Right ventricle myocardium inferior (tissue), 1 donor: ENCODE measurements at regions of chr3 and their contacts with region 1.

Region 1: GRCh38 chr3:120417272-120417911 is 33.4 kb downstream of the FSTL1 start:
- DNase-seq: peak; percentile 88
- ATAC-seq: peak; percentile 61

Region 2: DNA sequence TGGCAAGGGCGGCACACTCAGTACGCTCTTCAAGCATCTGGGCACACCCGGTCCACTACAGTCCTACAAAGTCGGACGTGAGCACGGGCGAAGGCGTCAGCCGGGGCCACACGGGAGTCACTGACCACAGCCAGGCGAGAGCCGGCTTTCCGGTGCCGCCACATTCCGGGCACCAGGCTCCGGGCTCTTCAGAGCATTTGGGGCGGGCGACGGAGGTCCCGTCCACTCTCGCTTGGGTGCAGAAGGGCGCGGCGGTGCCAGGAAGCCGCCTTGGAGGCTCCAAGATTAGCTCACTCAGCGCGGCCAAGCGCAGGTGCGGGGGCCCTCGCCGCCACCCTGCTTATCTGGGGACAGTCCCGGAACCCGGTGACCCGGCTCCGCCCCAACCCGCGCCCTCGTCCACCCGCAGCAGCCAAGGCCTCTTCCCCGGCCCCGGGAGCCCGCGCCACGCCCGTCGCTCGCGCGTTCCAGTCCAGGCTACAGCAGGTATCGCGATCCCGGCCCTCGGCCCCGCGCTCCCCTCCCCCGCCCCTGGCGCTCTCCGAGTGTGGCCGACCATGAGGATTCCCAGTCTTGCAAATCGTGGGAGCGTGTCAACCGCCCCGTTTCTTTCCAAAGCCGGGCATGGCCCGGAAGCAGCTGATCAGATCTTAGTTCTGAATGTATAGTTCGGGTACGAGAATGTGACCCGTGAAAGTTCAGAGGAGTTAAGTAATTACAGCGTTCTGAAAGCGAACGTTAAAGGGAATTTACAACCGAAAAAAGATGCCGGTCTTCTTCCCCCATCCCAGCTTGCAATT is 837.8 kb before region 1 on chr3 and contains the start of gene ADPRH:
- intact Hi-C with region 1: loop called (anchors 5 kb)
- DNase-seq: peak; percentile 92
- ATAC-seq: peak; percentile 94
- total RNA-seq, gene ADPRH: 10.1 TPM

Region 3: DNA sequence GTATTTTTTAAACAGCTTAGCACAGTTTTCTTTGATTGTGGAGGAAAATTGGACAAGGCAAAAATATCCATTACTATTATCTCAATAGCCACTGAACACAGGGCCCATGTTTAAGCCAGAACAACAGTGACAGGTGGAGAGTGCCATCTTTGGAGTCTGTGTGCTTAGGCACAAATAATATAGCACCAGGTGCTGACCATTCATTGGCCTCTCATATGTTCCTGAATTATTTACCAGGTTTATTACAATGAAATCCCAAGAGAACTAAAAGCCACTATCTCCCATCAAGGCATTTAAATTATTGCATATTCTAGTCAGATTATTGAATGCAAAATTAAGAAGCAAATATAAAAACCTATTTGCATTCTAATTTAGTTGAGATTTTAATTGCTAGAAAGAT is 172.0 kb before region 1 on chr3:
- intact Hi-C with region 1: loop called (anchors 2 kb)
- DNase-seq: no peak
- ATAC-seq: no peak

Region 4: GRCh38 chr3:120450600-120451271 is 33.3 kb after region 1 on chr3 and contains the start of gene FSTL1:
- intact Hi-C with region 1: loop called (anchors 2 kb)
- DNase-seq: peak; percentile 84
- ATAC-seq: peak; percentile 85
- total RNA-seq, gene FSTL1: 217 TPM

Region 5: GRCh38 chr3:120506828-120507774 is 89.7 kb after region 1 on chr3:
- intact Hi-C with region 1: loop called (anchors 2 kb)
- DNase-seq: no peak
- ATAC-seq: peak; percentile 50

Region 6: GRCh38 chr3:120742198-120742849 is 324.9 kb after region 1 on chr3 and contains the starts of genes GTF2E1 and RABL3:
- intact Hi-C with region 1: loop called (anchors 5 kb)
- DNase-seq: peak; percentile 95
- ATAC-seq: peak; percentile 100
- total RNA-seq, gene GTF2E1: 15.0 TPM
- total RNA-seq, gene RABL3: 18.2 TPM